ENCODE measurements at regions of chr12 and their contacts with region 1.

Region 1: DNA sequence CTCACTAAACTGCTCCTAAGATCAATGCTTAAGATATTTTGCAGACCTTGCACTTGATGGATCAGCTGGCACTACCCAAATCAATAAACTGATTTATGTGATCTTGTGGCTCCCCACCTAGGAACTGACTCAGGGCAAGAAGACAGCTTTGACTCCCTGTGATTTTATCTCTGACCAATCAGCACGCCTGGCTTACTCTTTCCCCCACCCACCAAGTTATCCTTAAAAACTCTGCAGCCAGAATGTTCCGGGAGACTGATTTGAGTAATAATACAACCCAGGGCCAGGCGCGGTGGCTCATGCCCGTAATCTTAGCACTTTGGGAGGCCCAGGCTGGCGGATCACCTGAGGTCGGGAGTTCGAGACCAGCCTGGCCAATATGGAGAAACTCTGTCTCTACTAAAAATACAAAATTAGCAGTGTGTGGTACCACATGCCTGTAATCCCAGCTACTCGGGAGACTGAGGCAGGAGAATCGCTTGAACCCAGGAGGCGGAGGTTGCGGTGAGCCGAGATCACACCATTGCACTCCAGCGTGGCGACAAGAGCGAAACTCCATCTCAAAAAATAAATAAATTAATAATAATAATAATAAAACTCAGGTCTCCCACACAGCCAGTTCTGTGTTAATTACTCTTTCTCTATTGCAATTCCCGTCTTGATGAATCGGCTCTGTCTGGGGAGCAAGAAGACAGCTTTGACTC is 12.0 kb downstream of the MORN3 start:
- DNase-seq: no peak
- H3K4me3 ChIP-seq: no peak overlapping the region
- H3K27ac ChIP-seq: no peak overlapping the region
- H3K4me1 ChIP-seq: no peaks in the 10 kb centered on the region
- H3K27me3 ChIP-seq: no peaks in the 10 kb centered on the region
- CTCF ChIP-seq: no peak

Region 2: DNA sequence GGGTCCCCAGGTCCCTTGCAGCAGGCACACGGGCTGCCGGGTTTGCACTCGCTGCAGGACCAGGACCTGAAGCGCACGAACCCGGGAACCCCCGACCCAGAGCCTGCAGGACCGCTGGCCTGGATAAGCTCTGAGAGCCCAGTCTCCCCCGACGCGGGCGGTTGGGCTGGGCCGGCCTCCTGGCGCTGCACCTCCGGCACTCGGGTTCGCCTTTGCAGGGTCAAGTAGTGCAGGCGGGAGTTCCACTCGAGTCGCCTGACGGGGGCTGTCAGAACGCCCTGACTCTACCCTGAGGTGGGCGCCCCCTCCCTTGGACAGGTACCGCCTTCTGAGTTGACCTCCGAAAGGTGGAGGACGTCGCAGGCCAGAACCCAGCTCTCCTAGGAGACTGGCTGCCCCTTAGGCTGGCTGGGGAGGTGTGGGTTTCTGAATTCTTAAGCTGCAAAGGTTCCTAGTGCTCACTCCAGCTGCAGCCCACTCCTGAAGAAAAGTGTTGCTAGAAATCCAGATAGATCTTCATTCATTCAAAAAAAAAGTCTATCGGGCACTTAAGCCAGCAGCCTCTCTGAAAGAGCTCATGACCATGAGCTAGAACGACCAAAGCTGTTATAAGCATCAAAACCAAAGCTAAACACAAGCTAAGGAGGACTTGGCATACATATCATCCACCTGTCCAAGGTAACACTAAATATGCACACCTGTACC is 189.5 kb before region 1 on chr12:
- CTCF ChIA-PET with region 1: interaction called, 11 read pairs
- POLR2A ChIA-PET with region 1: no interaction called
- intact Hi-C with region 1: no loop called
- DNase-seq: no peak
- H3K4me3 ChIP-seq: peak overlapping the region; percentile 50; the same call in 1 of the 2 replicates
- H3K27ac ChIP-seq: no peak overlapping the region
- H3K4me1 ChIP-seq: peaks cover 8% of the 10 kb centered on the region
- H3K27me3 ChIP-seq: no peaks in the 10 kb centered on the region
- CTCF ChIP-seq: no peak

Region 3: DNA sequence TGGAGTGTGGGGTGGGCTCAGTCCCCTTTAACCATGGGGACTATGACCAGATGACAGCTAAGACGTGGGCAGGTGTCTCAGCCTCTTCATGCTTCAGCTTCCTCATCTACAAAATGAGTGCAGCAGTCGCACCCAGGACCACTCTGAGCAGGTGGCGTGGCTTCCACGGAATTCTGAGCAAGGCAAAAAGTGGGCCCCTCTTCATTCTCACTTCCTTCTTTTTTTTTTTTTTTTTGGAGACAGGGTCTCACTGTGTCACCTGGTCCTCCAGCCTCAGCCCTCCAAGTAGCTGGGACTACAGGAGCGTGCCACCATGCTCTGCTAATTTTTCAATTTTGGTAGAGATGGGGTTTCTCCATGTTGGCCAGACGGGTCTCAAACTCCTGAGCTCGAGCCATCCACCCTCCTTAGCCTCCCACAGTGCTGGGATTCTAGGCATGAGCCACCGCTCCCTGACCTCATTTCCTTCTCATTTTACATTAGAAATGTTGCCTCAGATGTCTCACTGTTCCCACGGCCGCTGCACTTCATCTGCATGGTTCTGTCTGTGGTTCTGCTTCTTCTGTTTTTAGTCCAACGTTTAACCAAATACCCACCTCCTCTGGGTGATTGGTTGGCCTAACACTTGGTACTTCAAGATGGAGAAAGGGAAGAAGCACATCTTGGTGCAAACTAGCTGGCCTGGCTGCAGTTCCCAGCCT is 322.9 kb after region 1 on chr12:
- CTCF ChIA-PET with region 1: no interaction called
- POLR2A ChIA-PET with region 1: no interaction called
- intact Hi-C with region 1: no loop called
- DNase-seq: no peak
- H3K4me3 ChIP-seq: no peak overlapping the region
- H3K27ac ChIP-seq: no peak overlapping the region
- H3K4me1 ChIP-seq: no peaks in the 10 kb centered on the region
- H3K27me3 ChIP-seq: no peaks in the 10 kb centered on the region
- CTCF ChIP-seq: no peak

Region 4: GRCh38 chr12:122917504-122918121 is 1260.2 kb after region 1 on chr12:
- CTCF ChIA-PET with region 1: no interaction called
- POLR2A ChIA-PET with region 1: no interaction called
- intact Hi-C with region 1: no loop called
- DNase-seq: peak; percentile 88 to 93
- H3K4me3 ChIP-seq: no peak overlapping the region
- H3K27ac ChIP-seq: peak overlapping the region; percentile 90
- H3K4me1 ChIP-seq: peaks cover 61% of the 10 kb centered on the region
- H3K27me3 ChIP-seq: no peaks in the 10 kb centered on the region
- CTCF ChIP-seq: no peak